Endothelial cell of umbilical vein (primary cell): ENCODE measurements at regions of chr6 and their contacts with region 1.

Region 1: DNA sequence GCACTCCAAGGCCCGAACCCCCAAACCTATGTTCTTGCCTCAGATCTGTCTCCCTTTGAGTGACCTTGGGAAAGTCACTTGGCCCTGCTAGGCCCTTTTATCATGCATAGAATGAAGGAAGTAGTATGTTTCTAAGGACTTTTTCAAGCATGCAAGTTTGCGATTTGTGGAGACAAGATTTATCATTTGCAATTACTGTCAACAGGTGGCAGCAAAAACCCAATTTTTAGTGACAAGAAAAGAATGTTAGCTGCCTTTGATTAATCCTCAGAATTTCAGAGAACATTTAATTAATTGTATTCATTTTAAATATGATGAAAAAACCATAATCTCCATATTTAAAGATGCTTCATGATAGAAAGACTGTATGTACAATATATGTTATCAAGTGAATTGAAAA is 28.3 kb upstream of the PREP start:
- DNase-seq: peak; percentile 73
- H3K4me3 ChIP-seq: no peak overlapping the region
- H3K27ac ChIP-seq: peak overlapping the region; percentile 65
- H3K4me1 ChIP-seq: peaks cover 40% of the 10 kb centered on the region
- H3K27me3 ChIP-seq: no peaks in the 10 kb centered on the region
- CTCF ChIP-seq: peak; percentile 30 to 36
- POLR2A ChIP-seq: no peak

Region 2: DNA sequence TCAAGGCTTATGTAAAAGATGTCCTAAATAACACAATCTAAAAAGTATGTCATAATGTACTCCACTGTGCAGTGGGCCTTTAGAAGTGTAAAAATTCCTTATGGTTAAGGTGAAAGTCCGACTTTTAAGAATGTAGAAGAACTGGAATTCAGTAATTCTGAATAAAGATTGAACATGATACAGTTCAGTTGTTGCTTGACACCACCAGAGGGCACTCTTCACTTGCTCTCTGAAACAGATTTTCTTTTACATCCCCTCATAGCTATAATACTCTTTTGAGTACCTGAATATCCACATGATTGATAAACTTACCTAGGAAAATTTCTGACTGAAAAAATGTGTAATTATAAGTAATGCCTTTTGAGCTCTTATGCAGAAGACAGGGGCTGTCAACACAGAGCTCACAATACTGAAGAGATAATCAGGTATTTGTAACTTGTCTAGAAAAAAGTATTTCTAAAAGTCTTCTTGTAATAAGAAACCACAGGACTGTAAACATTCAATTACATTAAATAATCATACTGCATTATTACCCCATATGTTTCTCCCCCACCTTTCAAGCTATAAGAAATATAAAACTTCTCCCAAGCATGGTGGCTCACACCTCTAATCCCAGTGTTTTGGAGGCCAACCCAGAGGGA is 343.5 kb before region 1 on chr6:
- CTCF ChIA-PET with region 1: interaction called, 20 read pairs
- POLR2A ChIA-PET with region 1: no interaction called
- dilution Hi-C with region 1: no loop called
- intact Hi-C with region 1: no loop called
- DNase-seq: peak; percentile 54
- H3K4me3 ChIP-seq: no peak overlapping the region
- H3K27ac ChIP-seq: no peak overlapping the region
- H3K4me1 ChIP-seq: no peaks in the 10 kb centered on the region
- H3K27me3 ChIP-seq: peaks cover 0 to 2% of the 10 kb centered on the region in 2 experiments
- CTCF ChIP-seq: peak; percentile 52 to 59
- POLR2A ChIP-seq: no peak

Region 3: GRCh38 chr6:105459049-105459448 is 27.8 kb after region 1 on chr6:
- CTCF ChIA-PET with region 1: interaction called, 33 read pairs
- POLR2A ChIA-PET with region 1: interaction called, 5 read pairs
- dilution Hi-C with region 1: no loop called
- intact Hi-C with region 1: loop called (anchors 1 kb)
- DNase-seq: peak; percentile 22
- H3K4me3 ChIP-seq: no peak overlapping the region
- H3K27ac ChIP-seq: peak overlapping the region; percentile 81
- H3K4me1 ChIP-seq: peaks cover 25% of the 10 kb centered on the region
- H3K27me3 ChIP-seq: no peaks in the 10 kb centered on the region
- CTCF ChIP-seq: no peak
- POLR2A ChIP-seq: no peak

Region 4: GRCh38 chr6:105591053-105591452 is 159.8 kb after region 1 on chr6:
- CTCF ChIA-PET with region 1: interaction called, 4 read pairs
- POLR2A ChIA-PET with region 1: no interaction called
- dilution Hi-C with region 1: no loop called
- intact Hi-C with region 1: loop called (anchors 5 kb)
- DNase-seq: no peak
- H3K4me3 ChIP-seq: no peak overlapping the region
- H3K27ac ChIP-seq: no peak overlapping the region
- H3K4me1 ChIP-seq: no peaks in the 10 kb centered on the region
- H3K27me3 ChIP-seq: peaks cover 0 to 4% of the 10 kb centered on the region in 2 experiments
- CTCF ChIP-seq: no peak
- POLR2A ChIP-seq: no peak

Region 5: GRCh38 chr6:105733565-105734162 is 302.4 kb after region 1 on chr6:
- CTCF ChIA-PET with region 1: interaction called, 26 read pairs
- POLR2A ChIA-PET with region 1: no interaction called
- dilution Hi-C with region 1: no loop called
- intact Hi-C with region 1: loop called (anchors 1 kb)
- DNase-seq: peak; percentile 13
- H3K4me3 ChIP-seq: no peak overlapping the region
- H3K27ac ChIP-seq: no peak overlapping the region
- H3K4me1 ChIP-seq: no peaks in the 10 kb centered on the region
- H3K27me3 ChIP-seq: peaks cover 0 to 3% of the 10 kb centered on the region in 2 experiments
- CTCF ChIP-seq: peak; percentile 36 to 44
- POLR2A ChIP-seq: no peak

Region 6: DNA sequence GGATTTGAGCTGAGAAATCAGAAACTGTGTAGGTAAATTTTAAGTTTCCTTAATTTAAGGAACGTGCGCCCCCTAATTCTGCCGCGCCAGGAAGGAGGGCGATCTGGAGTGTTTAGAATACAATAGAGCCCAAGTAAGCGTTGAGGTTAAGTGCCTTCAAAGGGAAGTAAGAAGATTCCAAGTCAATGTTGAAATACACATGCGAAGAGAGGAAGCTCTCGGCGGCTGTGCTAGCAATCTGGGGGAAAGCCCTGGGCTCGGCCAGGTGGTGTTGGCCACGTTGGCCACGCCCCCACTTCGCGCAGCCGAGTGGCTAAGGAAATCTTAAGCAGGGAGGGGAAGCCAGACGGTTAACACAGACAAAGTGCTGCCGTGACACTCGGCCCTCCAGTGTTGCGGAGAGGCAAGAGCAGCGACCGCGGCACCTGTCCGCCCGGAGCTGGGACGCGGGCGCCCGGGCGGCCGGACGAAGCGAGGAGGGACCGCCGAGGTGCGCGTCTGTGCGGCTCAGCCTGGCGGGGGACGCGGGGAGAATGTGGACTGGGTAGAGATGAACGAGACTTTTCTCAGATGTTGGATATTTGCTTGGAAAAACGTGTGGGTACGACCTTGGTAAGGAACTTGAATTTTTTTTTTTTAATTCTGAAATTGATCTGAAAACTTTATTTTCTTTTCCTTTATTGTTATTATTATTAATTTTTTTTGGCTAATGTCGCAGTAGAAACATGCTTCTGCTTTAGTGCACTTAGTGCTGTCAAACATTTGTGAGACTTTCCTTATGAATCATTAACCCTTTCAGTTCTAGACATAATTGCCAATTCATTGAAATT is 655.0 kb after region 1 on chr6 and contains the start of gene PRDM1:
- CTCF ChIA-PET with region 1: interaction called, 4 read pairs
- POLR2A ChIA-PET with region 1: no interaction called
- dilution Hi-C with region 1: no loop called
- intact Hi-C with region 1: loop called (anchors 5 kb)
- DNase-seq: peak; percentile 38
- H3K4me3 ChIP-seq: peak within 1 kb of the TSS; percentile 30 to 67 (median 64)
- H3K27ac ChIP-seq: no peak within 1 kb of the TSS
- H3K4me1 ChIP-seq: peaks cover 19% of the 10 kb centered on the region
- H3K27me3 ChIP-seq: peaks cover 8 to 24% of the 10 kb centered on the region in 2 experiments
- CTCF ChIP-seq: no peak
- POLR2A ChIP-seq: no peak
- total RNA-seq, gene PRDM1: 2.7 and 4.8 TPM in 2 replicates

Region 7: DNA sequence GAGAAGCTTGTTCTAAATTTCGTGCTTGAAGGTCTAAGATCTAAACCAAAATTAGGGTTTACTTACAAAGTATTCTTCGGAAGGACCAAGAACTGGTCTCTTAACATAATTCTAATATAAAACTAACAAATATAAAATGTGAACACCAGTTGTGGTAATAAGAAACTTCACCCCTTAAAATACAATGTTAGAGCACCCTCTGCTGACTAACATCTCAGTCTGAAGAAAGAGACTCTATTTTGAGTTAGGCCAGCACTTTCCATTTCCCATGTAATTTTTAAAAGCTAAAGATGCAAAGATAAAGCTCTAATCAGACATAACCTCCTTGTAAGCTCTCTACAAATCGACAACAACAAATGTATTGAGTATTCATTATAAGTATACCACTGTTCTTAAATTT is 869.7 kb after region 1 on chr6:
- CTCF ChIA-PET with region 1: interaction called, 34 read pairs
- POLR2A ChIA-PET with region 1: no interaction called
- dilution Hi-C with region 1: no loop called
- intact Hi-C with region 1: loop called (anchors 1 kb)
- DNase-seq: peak; percentile 38
- H3K4me3 ChIP-seq: no peak overlapping the region
- H3K27ac ChIP-seq: no peak overlapping the region
- H3K4me1 ChIP-seq: no peaks in the 10 kb centered on the region
- H3K27me3 ChIP-seq: no peaks in the 10 kb centered on the region
- CTCF ChIP-seq: peak; percentile 11 to 29
- POLR2A ChIP-seq: no peak